ENCODE measurements at regions of chr1 and their contacts with region 1.

Region 1: DNA sequence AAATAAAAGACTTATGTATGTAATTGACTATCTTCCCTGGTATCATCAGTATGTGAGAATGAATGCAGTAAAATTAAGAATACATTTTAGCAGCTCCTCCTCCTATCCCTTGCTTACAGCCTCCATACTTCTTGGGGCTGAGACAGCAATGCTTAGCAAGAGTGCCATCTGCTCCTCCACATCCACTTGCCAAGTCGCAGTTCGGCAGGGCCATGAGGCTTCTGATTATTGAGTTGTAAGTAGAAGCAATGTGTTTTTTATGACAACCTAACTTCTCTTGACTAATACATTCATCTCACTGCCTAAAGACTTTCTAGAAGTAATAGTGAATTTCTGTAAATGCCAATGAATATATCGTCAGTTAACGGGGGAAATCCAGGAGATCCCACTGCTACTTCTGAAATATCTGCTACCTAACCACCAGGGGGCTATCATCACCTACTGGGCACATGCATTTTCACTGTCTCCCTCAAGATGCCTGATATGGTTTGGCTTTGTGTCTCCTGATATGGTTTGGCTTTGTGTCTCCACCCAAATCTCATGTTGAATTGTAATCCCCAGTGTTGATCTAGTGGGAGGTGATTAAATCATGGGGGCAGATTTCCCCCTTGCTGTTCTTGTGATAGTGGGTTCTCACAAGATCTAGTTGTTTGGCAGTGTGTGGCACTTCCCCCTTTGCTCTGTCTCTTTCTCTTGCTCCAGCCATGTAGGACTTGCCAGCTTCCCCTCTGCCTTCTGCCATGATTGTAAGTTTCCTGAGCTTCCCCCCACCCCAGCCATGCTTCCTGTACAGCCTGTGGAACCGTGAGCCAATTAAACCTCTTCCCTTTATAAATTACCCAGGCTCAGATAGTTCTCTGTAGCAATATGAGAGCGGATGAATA is 59.6 kb downstream of the EXTL2 start:
- DNase-seq: no peak
- H3K4me3 ChIP-seq: no peak overlapping the region
- H3K27ac ChIP-seq: no peak overlapping the region
- H3K4me1 ChIP-seq: no peaks in the 10 kb centered on the region
- H3K27me3 ChIP-seq: no peaks in the 10 kb centered on the region; a peak in 1 of 7 replicates
- CTCF ChIP-seq: peak; percentile 11 to 77 (median 64)
- EP300 ChIP-seq: no peak
- POLR2A ChIP-seq: no peak
- RAD21 ChIP-seq: peak; percentile 69 to 72

Region 2: GRCh38 chr1:100277866-100278265 is 557.2 kb before region 1 on chr1:
- CTCF ChIA-PET with region 1: no interaction called
- POLR2A ChIA-PET with region 1: no interaction called
- DNase-seq: no peak
- H3K4me3 ChIP-seq: no peak overlapping the region
- H3K27ac ChIP-seq: no peak overlapping the region
- H3K4me1 ChIP-seq: no peaks in the 10 kb centered on the region
- H3K27me3 ChIP-seq: no peaks in the 10 kb centered on the region
- CTCF ChIP-seq: no peak
- EP300 ChIP-seq: no peak
- POLR2A ChIP-seq: no peak
- RAD21 ChIP-seq: no peak

Region 3: GRCh38 chr1:100816049-100816448 is 19.0 kb before region 1 on chr1:
- CTCF ChIA-PET with region 1: interaction called, 11 read pairs
- POLR2A ChIA-PET with region 1: no interaction called
- DNase-seq: no peak
- H3K4me3 ChIP-seq: no peak overlapping the region
- H3K27ac ChIP-seq: no peak overlapping the region
- H3K4me1 ChIP-seq: peaks cover 0 to 4% (median 1%) of the 10 kb centered on the region in 4 experiments; a peak in 4 of 7 replicates
- H3K27me3 ChIP-seq: no peaks in the 10 kb centered on the region
- CTCF ChIP-seq: no peak
- EP300 ChIP-seq: no peak
- POLR2A ChIP-seq: no peak
- RAD21 ChIP-seq: no peak

Region 4: GRCh38 chr1:100847361-100848082 is 12.5 kb after region 1 on chr1:
- CTCF ChIA-PET with region 1: interaction called, 12 read pairs
- POLR2A ChIA-PET with region 1: no interaction called
- DNase-seq: no peak
- H3K4me3 ChIP-seq: no peak overlapping the region
- H3K27ac ChIP-seq: no peak overlapping the region
- H3K4me1 ChIP-seq: no peaks in the 10 kb centered on the region
- H3K27me3 ChIP-seq: peaks cover 11 to 45% (median 24%) of the 10 kb centered on the region in 4 experiments
- CTCF ChIP-seq: no peak
- EP300 ChIP-seq: no peak
- POLR2A ChIP-seq: no peak
- RAD21 ChIP-seq: no peak

Region 5: DNA sequence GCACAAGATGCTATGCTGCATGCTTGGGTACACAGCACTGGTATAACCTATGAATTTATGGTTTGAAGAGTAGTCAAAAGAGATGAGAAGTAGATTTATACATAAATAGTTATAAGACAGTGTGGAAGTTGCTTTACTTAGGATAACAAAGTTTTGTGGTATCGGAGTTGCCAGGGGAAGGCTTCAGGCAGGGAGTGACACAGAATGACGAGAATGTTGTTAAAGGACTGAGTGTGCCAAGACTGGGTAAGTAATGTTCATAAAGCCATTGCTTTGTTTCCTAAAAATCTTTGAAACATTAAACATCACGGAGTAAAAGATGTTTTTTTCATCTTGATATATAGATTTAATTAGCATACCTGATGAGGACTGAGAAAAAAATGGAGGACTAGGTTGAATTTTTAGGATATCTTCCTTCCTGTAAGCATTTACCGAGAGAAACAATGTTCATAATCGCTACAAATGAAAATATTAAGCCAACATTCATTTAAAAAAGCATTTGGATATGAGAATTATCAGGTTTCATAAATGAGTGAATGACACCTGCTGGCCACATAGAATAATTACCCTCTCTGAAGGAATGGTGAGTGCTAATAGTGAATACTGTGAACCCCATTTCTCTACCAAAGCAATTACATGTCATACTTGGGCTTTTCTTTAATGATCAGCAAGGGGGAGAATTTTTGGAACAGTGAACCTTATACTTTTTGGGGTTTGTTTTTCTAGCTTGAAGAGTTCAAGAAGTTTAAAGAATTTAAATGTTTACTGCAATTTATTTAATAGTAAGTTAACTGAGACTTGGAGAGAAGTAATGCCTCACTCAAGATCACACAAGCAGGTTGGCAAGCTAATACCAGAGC is 31.3 kb after region 1 on chr1:
- CTCF ChIA-PET with region 1: interaction called, 36 read pairs
- POLR2A ChIA-PET with region 1: no interaction called
- DNase-seq: no peak
- H3K4me3 ChIP-seq: no peak overlapping the region
- H3K27ac ChIP-seq: no peak overlapping the region
- H3K4me1 ChIP-seq: no peaks in the 10 kb centered on the region
- H3K27me3 ChIP-seq: peaks cover 0 to 1% (median 0%) of the 10 kb centered on the region in 4 experiments; a peak in 1 of 7 replicates
- CTCF ChIP-seq: peak in 2 of 3 experiments; percentile 17 to 38; a peak in 2 of 4 replicates
- EP300 ChIP-seq: no peak
- POLR2A ChIP-seq: no peak
- RAD21 ChIP-seq: peak; percentile 49 to 53

Region 6: GRCh38 chr1:100902365-100902764 is 67.3 kb after region 1 on chr1:
- CTCF ChIA-PET with region 1: no interaction called
- POLR2A ChIA-PET with region 1: no interaction called
- DNase-seq: no peak
- H3K4me3 ChIP-seq: no peak overlapping the region
- H3K27ac ChIP-seq: no peak overlapping the region
- H3K4me1 ChIP-seq: peaks cover 0 to under 1% (median 0%) of the 10 kb centered on the region in 4 experiments; a peak in 2 of 7 replicates
- H3K27me3 ChIP-seq: no peaks in the 10 kb centered on the region
- CTCF ChIP-seq: no peak
- EP300 ChIP-seq: no peak
- POLR2A ChIP-seq: no peak
- RAD21 ChIP-seq: no peak